GM12878 (cell line): ENCODE measurements at regions of chr16 and their contacts with region 1.

Region 1: DNA sequence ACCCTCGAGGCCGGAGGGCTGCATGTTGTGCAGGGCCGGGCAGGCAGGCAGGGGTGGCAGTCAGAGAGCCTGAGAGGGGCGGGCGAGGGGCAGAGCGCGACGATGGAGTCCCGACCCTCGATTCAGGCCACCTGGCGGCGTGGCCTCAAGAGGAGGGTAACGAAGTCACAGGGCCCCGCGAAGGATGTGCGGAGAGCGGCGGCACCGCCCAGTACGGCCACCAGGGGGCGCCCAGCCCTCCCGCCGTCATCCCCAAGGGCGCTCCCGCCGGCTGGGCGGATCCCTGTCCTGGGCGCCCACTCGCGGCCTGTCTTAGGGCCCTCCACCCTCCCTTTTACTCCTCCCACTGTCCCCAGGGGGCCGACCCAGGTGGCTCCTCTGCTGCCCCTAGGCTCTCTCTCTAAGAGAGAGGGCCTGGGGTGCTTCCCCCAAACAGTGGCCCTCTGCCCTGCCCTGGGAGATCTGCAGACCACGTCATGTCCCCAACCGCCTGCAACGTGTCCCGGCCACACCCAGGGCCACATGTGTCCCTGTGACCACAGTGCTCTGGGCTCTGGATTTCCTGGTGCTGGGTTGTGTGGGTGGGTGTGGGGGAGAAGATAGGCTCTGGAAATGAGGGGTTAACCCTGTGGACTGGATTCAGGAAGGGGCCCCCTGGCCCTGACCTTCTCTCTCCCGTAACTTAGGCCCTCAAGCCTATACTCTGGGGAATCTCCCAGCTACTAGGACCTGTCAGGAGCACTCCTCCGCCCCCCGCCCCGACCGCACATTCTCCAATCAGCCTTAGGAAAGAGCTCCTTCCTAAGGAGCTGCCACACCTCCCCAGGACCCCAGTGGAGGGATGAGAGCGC is 5.9 kb downstream of the DPEP2 start:
- DNase-seq: no peak
- ATAC-seq: peak; percentile 92
- H3K4me3 ChIP-seq: peak overlapping the region; percentile 24; the same call in 1 of the 2 replicates
- H3K27ac ChIP-seq: peak overlapping the region; percentile 64
- H3K4me1 ChIP-seq: peaks cover 39% of the 10 kb centered on the region
- H3K27me3 ChIP-seq: no peaks in the 10 kb centered on the region
- CTCF ChIP-seq: peak; percentile 92 to 95 (median 94)
- EP300 ChIP-seq: no peak
- POLR2A ChIP-seq: peak; percentile 70
- RAD21 ChIP-seq: peak; percentile 52

Region 2: GRCh38 chr16:67979955-67980678 is 13.3 kb before region 1 on chr16 and contains the start of gene DPEP3:
- CTCF ChIA-PET with region 1: interaction called, 11 read pairs
- POLR2A ChIA-PET with region 1: interaction called, 3 read pairs
- RAD21 ChIA-PET with region 1: interaction called, 5 read pairs
- SMC1A ChIA-PET with region 1: interaction called, 3 read pairs
- in situ Hi-C with region 1: no loop called
- intact Hi-C with region 1: no loop called
- DNase-seq: no peak
- ATAC-seq: no peak
- H3K4me3 ChIP-seq: no peak within 1 kb of the TSS
- H3K27ac ChIP-seq: no peak within 1 kb of the TSS
- H3K4me1 ChIP-seq: peaks cover 28% of the 10 kb centered on the region
- H3K27me3 ChIP-seq: no peaks in the 10 kb centered on the region; a peak in 1 of 4 replicates
- CTCF ChIP-seq: 0 out of 6 replicates have a peak, but pooled peaks of 1 of the 3 experiments have one; percentile 11
- EP300 ChIP-seq: no peak
- POLR2A ChIP-seq: no peak
- RAD21 ChIP-seq: no peak
- polyA plus RNA-seq, gene DPEP3: not detected

Region 3: DNA sequence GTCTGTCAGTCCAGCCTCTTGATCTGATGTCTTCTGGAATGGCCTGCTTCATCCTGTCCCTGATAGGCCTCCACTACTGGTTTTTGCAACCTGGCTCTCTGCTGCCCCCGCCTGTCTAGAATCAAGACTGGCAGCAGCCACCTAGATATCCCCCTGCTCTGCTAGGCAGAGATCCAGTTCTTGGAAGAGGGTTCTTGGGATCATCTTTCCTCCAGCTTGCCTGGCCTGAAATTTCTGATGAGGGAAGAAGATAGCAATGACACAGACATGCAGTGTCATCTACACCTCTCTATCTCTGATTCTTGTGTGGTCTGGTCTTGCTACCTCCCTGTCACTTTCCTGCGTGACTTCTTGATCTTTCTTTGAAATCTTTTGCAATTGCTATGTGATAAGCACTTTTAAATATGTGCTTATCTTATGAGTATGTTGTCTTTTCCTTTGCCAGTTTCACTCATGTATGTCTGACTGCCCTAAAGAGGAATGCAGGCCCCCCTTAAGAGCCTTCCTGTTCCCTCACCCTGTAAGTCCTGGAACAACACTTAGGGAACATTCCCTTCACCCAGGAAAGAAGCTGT is 71.5 kb after region 1 on chr16:
- CTCF ChIA-PET with region 1: interaction called, 7 read pairs
- POLR2A ChIA-PET with region 1: no interaction called
- RAD21 ChIA-PET with region 1: interaction called, 4 read pairs
- SMC1A ChIA-PET with region 1: interaction called, 3 read pairs
- in situ Hi-C with region 1: no loop called
- intact Hi-C with region 1: loop called (anchors 2 kb)
- DNase-seq: no peak
- ATAC-seq: peak; percentile 98
- H3K4me3 ChIP-seq: no peak overlapping the region
- H3K27ac ChIP-seq: no peak overlapping the region
- H3K4me1 ChIP-seq: peaks cover 4% of the 10 kb centered on the region; the same call in 1 of the 2 replicates
- H3K27me3 ChIP-seq: no peaks in the 10 kb centered on the region
- CTCF ChIP-seq: peak; percentile 87 to 88 (median 87)
- EP300 ChIP-seq: no peak
- POLR2A ChIP-seq: no peak
- RAD21 ChIP-seq: peak; percentile 70